MCF 10A (cell line): ENCODE measurements at regions of chr5 and their contacts with region 1.

Region 1: GRCh38 chr5:33148076-33148501 is 292.7 kb upstream of the TARS1 start:
- DNase-seq: peak; percentile 83
- H3K4me3 Mint-ChIP-seq: peak overlapping the region; percentile 45
- H3K27ac Mint-ChIP-seq: peak overlapping the region; percentile 97
- H3K4me1 Mint-ChIP-seq: peaks cover 24% of the 10 kb centered on the region
- H3K27me3 Mint-ChIP-seq: no peaks in the 10 kb centered on the region
- CTCF ChIP-seq: no peak

Region 2: GRCh38 chr5:33049845-33050244 is 98.2 kb before region 1 on chr5:
- CTCF ChIA-PET with region 1: no interaction called
- POLR2A ChIA-PET with region 1: no interaction called
- intact Hi-C with region 1: loop called (anchors 10 kb)
- DNase-seq: peak; percentile 94
- H3K4me3 Mint-ChIP-seq: peak overlapping the region; percentile 65
- H3K27ac Mint-ChIP-seq: peak overlapping the region; percentile 85
- H3K4me1 Mint-ChIP-seq: peaks cover 22% of the 10 kb centered on the region
- H3K27me3 Mint-ChIP-seq: no peaks in the 10 kb centered on the region
- CTCF ChIP-seq: no peak

Region 3: GRCh38 chr5:33129309-33129708 is 18.8 kb before region 1 on chr5:
- CTCF ChIA-PET with region 1: no interaction called
- POLR2A ChIA-PET with region 1: no interaction called
- intact Hi-C with region 1: no loop called
- DNase-seq: no peak
- H3K4me3 Mint-ChIP-seq: no peak overlapping the region
- H3K27ac Mint-ChIP-seq: no peak overlapping the region
- H3K4me1 Mint-ChIP-seq: no peaks in the 10 kb centered on the region
- H3K27me3 Mint-ChIP-seq: no peaks in the 10 kb centered on the region
- CTCF ChIP-seq: no peak

Region 4: GRCh38 chr5:33203931-33204330 is 55.8 kb after region 1 on chr5:
- CTCF ChIA-PET with region 1: no interaction called
- POLR2A ChIA-PET with region 1: no interaction called
- intact Hi-C with region 1: no loop called
- DNase-seq: no peak
- H3K4me3 Mint-ChIP-seq: no peak overlapping the region
- H3K27ac Mint-ChIP-seq: no peak overlapping the region
- H3K4me1 Mint-ChIP-seq: no peaks in the 10 kb centered on the region
- H3K27me3 Mint-ChIP-seq: no peaks in the 10 kb centered on the region
- CTCF ChIP-seq: no peak

Region 5: GRCh38 chr5:33565324-33565723 is 417.2 kb after region 1 on chr5:
- CTCF ChIA-PET with region 1: no interaction called
- POLR2A ChIA-PET with region 1: no interaction called
- intact Hi-C with region 1: no loop called
- DNase-seq: no peak
- H3K4me3 Mint-ChIP-seq: no peak overlapping the region
- H3K27ac Mint-ChIP-seq: no peak overlapping the region
- H3K4me1 Mint-ChIP-seq: no peaks in the 10 kb centered on the region
- H3K27me3 Mint-ChIP-seq: no peaks in the 10 kb centered on the region
- CTCF ChIP-seq: no peak